Caco-2 (cell line): ENCODE measurements at regions of chr2 and their contacts with region 1.

Region 1: DNA sequence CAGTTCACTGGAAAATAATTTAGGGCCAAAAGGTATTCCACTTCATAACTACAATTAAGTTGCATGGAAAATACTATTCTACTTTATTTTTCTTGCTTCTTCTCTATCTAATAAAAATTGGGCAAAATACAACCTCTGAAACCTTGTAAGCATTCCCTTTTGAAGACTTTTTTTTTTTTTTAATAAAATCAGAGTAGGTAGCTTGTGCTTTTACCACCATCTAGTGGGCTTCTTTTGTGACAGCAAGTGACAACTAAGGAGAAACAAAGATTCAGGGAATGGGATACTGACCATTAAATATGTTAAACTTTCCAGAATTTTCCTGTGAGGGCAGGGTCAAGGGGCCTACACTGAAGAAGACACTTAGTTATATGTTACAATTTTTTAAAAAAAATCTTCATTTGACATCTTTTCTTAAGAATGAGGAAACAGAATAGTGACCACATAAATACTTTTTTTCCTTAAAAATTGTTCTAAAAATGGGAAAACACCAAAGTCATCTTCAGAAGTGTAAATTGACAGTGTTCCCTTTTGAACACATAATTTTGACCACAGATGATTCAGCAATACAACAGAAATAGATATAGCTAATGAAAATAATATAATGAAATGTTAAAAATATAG is 1183.2 kb upstream of the ACVR2A start:
- DNase-seq: peak in 1 of 2 experiments; percentile 30
- H3K4me3 ChIP-seq: no peak overlapping the region
- H3K4me3 Mint-ChIP-seq: no peak overlapping the region
- H3K27ac Mint-ChIP-seq: no peak overlapping the region
- H3K4me1 ChIP-seq: no peaks in the 10 kb centered on the region
- H3K4me1 Mint-ChIP-seq: no peaks in the 10 kb centered on the region
- H3K27me3 ChIP-seq: no peaks in the 10 kb centered on the region
- H3K27me3 Mint-ChIP-seq: peaks cover 3% of the 10 kb centered on the region
- CTCF ChIP-seq: peak; percentile 66 to 71

Region 2: DNA sequence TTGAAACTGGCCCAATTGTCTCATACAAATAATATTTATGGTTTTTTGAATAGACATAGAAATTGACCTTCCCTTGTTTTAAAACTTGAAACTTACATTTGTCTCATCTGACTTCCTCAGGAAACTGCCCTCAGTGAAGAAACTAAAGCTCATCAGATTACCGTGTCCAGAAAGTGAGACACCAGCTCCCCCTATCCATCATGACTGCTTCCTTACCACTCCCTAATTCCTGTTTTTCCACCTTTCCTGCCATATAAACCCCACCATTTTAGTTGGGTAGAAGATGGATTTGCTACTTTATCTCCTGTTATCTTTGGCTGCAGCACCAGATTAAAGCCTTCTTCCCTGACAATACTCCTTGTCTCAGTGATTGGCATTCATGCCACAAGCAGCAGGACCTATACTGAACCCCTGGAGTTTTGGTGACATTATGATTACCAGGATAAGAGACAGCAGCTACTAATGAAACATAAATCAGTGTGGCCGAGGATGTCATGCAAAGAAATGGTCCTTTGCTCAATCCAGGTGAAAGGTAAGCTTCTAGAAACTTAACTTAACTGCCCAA is 514.1 kb before region 1 on chr2:
- CTCF ChIA-PET with region 1: no interaction called
- POLR2A ChIA-PET with region 1: no interaction called
- intact Hi-C with region 1: loop called (anchors 5 kb)
- DNase-seq: peak in 1 of 2 experiments; percentile 2
- H3K4me3 ChIP-seq: no peak overlapping the region
- H3K4me3 Mint-ChIP-seq: no peak overlapping the region
- H3K27ac Mint-ChIP-seq: no peak overlapping the region
- H3K4me1 ChIP-seq: no peaks in the 10 kb centered on the region
- H3K4me1 Mint-ChIP-seq: no peaks in the 10 kb centered on the region
- H3K27me3 ChIP-seq: no peaks in the 10 kb centered on the region
- H3K27me3 Mint-ChIP-seq: no peaks in the 10 kb centered on the region
- CTCF ChIP-seq: peak in 1 of 2 experiments; percentile 3

Region 3: DNA sequence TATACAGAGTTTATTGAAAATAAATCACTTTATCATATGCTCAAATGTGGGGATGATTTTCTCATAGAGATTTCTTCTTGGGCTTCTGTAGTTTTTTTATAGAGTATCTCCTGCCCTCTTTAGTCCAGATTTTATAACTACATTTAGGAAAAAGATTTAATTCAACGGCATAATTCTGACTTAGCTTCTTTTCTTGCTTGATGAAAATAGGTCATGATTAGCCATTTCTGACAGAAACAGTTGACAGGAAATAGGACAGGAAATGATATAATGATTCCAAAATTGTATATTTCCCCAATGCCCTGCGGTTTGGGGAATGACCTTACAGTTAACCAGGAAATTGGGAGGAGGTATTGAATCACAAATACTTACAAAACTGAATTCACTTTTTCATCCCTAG is 348.7 kb before region 1 on chr2:
- CTCF ChIA-PET with region 1: no interaction called
- POLR2A ChIA-PET with region 1: no interaction called
- intact Hi-C with region 1: no loop called
- DNase-seq: no peak
- H3K4me3 ChIP-seq: no peak overlapping the region
- H3K4me3 Mint-ChIP-seq: no peak overlapping the region
- H3K27ac Mint-ChIP-seq: no peak overlapping the region
- H3K4me1 ChIP-seq: no peaks in the 10 kb centered on the region
- H3K4me1 Mint-ChIP-seq: no peaks in the 10 kb centered on the region
- H3K27me3 ChIP-seq: no peaks in the 10 kb centered on the region
- H3K27me3 Mint-ChIP-seq: no peaks in the 10 kb centered on the region
- CTCF ChIP-seq: no peak

Region 4: GRCh38 chr2:146412625-146413024 is 249.0 kb before region 1 on chr2:
- CTCF ChIA-PET with region 1: no interaction called
- POLR2A ChIA-PET with region 1: no interaction called
- intact Hi-C with region 1: loop called (anchors 5 kb)
- DNase-seq: peak; percentile 52 to 61
- H3K4me3 ChIP-seq: no peak overlapping the region
- H3K4me3 Mint-ChIP-seq: no peak overlapping the region
- H3K27ac Mint-ChIP-seq: no peak overlapping the region
- H3K4me1 ChIP-seq: no peaks in the 10 kb centered on the region
- H3K4me1 Mint-ChIP-seq: no peaks in the 10 kb centered on the region
- H3K27me3 ChIP-seq: no peaks in the 10 kb centered on the region
- H3K27me3 Mint-ChIP-seq: no peaks in the 10 kb centered on the region
- CTCF ChIP-seq: peak in 1 of 2 experiments; percentile 43

Region 5: DNA sequence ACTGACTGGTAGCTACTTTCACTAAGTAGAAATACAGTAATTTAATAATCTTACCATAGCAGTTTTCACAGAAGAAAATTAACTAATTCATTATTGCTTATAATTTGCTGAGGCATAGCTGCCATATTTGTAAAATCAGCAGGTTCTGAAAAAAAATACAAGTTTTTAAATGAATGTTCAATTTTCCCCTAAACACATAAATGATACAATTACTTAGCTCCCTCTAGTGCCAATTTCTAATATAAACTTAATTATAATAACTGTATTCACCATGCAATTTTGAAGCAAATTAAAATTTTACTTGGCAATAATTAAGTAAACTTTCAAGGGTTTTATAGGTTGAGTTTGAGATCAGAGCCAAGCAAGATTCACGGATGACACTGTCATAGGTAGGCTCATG is 138.4 kb before region 1 on chr2:
- CTCF ChIA-PET with region 1: no interaction called
- POLR2A ChIA-PET with region 1: no interaction called
- intact Hi-C with region 1: loop called (anchors 5 kb)
- DNase-seq: no peak
- H3K4me3 ChIP-seq: no peak overlapping the region
- H3K4me3 Mint-ChIP-seq: no peak overlapping the region
- H3K27ac Mint-ChIP-seq: no peak overlapping the region
- H3K4me1 ChIP-seq: no peaks in the 10 kb centered on the region
- H3K4me1 Mint-ChIP-seq: no peaks in the 10 kb centered on the region
- H3K27me3 ChIP-seq: no peaks in the 10 kb centered on the region
- H3K27me3 Mint-ChIP-seq: no peaks in the 10 kb centered on the region
- CTCF ChIP-seq: peak in 1 of 2 experiments; percentile 56

Region 6: DNA sequence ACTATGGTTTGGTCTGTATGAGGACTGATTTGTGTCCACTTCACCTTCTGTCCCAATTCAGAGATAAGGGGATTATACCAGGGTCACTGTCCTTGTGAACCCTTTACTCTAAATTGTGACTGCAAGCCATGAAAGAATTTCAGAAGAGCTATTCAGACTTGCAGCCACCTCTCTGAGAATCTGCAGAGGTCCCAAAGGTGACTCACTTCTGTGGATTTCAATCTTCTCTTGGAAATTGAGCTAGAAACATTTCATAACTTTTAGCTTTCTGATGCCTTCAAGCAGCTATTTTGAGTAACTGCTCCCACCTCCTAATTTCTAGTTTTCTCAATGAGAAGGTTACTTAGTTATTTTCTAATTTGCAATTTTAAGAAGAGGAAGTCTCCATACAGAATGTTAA is 59.2 kb before region 1 on chr2:
- CTCF ChIA-PET with region 1: no interaction called
- POLR2A ChIA-PET with region 1: no interaction called
- intact Hi-C with region 1: no loop called
- DNase-seq: peak in 1 of 2 experiments; percentile 15
- H3K4me3 ChIP-seq: no peak overlapping the region
- H3K4me3 Mint-ChIP-seq: no peak overlapping the region
- H3K27ac Mint-ChIP-seq: no peak overlapping the region
- H3K4me1 ChIP-seq: peaks cover 9% of the 10 kb centered on the region; the same call in 1 of the 2 replicates
- H3K4me1 Mint-ChIP-seq: peaks cover 6% of the 10 kb centered on the region
- H3K27me3 ChIP-seq: no peaks in the 10 kb centered on the region
- H3K27me3 Mint-ChIP-seq: no peaks in the 10 kb centered on the region
- CTCF ChIP-seq: no peak

Region 7: GRCh38 chr2:146651361-146651760 is 10.2 kb before region 1 on chr2:
- CTCF ChIA-PET with region 1: no interaction called
- POLR2A ChIA-PET with region 1: no interaction called
- intact Hi-C with region 1: no loop called
- DNase-seq: no peak
- H3K4me3 ChIP-seq: no peak overlapping the region
- H3K4me3 Mint-ChIP-seq: no peak overlapping the region
- H3K27ac Mint-ChIP-seq: no peak overlapping the region
- H3K4me1 ChIP-seq: no peaks in the 10 kb centered on the region
- H3K4me1 Mint-ChIP-seq: no peaks in the 10 kb centered on the region
- H3K27me3 ChIP-seq: no peaks in the 10 kb centered on the region
- H3K27me3 Mint-ChIP-seq: no peaks in the 10 kb centered on the region
- CTCF ChIP-seq: no peak